ENCODE measurements at regions of chr3 and their contacts with region 1.

Region 1: GRCh38 chr3:10164546-10165393 is at the start of gene IRAK2:
- DNase-seq: peak; percentile 71 to 80 (median 76)
- ATAC-seq: peak; percentile 96
- H3K4me3 ChIP-seq: peak within 1 kb of the TSS; percentile 52 to 81
- H3K27ac ChIP-seq: peak within 1 kb of the TSS in 3 of 4 donors; percentile 52 to 73 (median 68)
- H3K4me1 ChIP-seq: peaks cover 14% of the 10 kb centered on the region
- H3K27me3 ChIP-seq: no peaks in the 10 kb centered on the region
- CTCF ChIP-seq: peak; percentile 67 to 99 (median 78)
- POLR2A ChIP-seq: peak; percentile 32 to 67 (median 65)
- total RNA-seq, gene IRAK2: 0.99 to 3.9 TPM

Region 2: DNA sequence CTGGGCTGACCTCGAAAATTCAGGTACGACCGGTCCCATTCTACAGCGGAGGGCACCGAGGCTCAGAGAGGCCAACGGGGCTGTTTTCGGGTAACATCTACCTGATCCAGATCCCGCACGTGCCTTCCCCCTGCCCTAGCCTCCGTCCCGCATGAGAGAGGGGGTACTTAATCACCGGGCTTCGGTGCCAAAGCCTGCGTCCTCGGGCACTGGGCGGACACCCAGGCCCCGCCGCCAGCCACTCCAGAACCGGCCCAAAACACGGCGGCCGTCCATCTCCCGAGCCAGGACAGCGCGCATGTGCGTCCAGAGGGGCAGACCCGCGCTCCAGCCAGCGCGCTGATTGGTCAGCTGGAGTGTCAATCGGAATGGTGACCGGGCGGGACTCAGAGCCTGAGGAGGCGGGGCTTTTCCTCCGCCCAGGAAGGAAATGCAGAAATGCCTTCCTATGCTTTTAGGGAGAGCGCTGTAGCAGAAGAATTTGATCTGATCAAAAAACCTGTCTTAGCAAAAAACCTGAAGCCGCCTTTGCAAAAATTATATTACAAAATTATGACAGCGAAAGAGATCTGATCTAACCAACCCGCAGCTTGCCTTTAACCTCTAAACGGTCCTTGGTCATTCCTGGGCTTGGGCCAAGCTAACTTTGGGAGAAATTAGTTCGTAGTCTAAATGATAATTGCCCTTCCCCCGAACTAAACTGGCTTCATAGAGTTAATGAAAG is 320.9 kb before region 1 on chr3 and contains the start of gene RPUSD3:
- intact Hi-C with region 1: no loop called
- DNase-seq: peak; percentile 97 to 99 (median 98)
- ATAC-seq: peak; percentile 100
- H3K4me3 ChIP-seq: peak within 1 kb of the TSS; percentile 32 to 75
- H3K27ac ChIP-seq: peak within 1 kb of the TSS; percentile 35 to 86 (median 76)
- H3K4me1 ChIP-seq: peaks cover 19% of the 10 kb centered on the region
- H3K27me3 ChIP-seq: no peaks in the 10 kb centered on the region
- CTCF ChIP-seq: no peak
- POLR2A ChIP-seq: peak in 2 of 3 donors; percentile 60 to 61
- total RNA-seq, gene RPUSD3: 31.6 to 51.4 TPM

Region 3: GRCh38 chr3:10224784-10225665 is 60.3 kb after region 1 on chr3:
- intact Hi-C with region 1: loop called (anchors 10 kb)
- DNase-seq: peak; percentile 78 to 83 (median 80)
- ATAC-seq: peak; percentile 86
- H3K4me3 ChIP-seq: no peak overlapping the region
- H3K27ac ChIP-seq: peak overlapping the region in 1 of 4 donors; percentile 24
- H3K4me1 ChIP-seq: peaks cover 12% of the 10 kb centered on the region
- H3K27me3 ChIP-seq: no peaks in the 10 kb centered on the region
- CTCF ChIP-seq: peak; percentile 66 to 94 (median 90)
- POLR2A ChIP-seq: no peak